ENCODE measurements at regions of chr12 and their contacts with region 1.

Region 1: GRCh38 chr12:121499929-121500793 is 80.7 kb downstream of the KDM2B start:
- DNase-seq: peak; percentile 82
- ATAC-seq: peak; percentile 91
- H3K4me3 ChIP-seq: no peak overlapping the region
- H3K4me3 Mint-ChIP-seq: no peak overlapping the region
- H3K27ac ChIP-seq: no peak overlapping the region
- H3K27ac Mint-ChIP-seq: no peak overlapping the region
- H3K4me1 ChIP-seq: peaks cover 10 to 19% of the 10 kb centered on the region in 2 donors
- H3K4me1 Mint-ChIP-seq: peaks cover 16% of the 10 kb centered on the region
- H3K27me3 ChIP-seq: no peaks in the 10 kb centered on the region
- H3K27me3 Mint-ChIP-seq: no peaks in the 10 kb centered on the region
- CTCF ChIP-seq: peak; percentile 99

Region 2: GRCh38 chr12:121443911-121444841 is 56.0 kb before region 1 on chr12:
- CTCF ChIA-PET with region 1: no interaction called
- POLR2A ChIA-PET with region 1: no interaction called
- intact Hi-C with region 1: no loop called
- DNase-seq: no peak
- ATAC-seq: no peak
- H3K4me3 ChIP-seq: no peak overlapping the region
- H3K4me3 Mint-ChIP-seq: no peak overlapping the region
- H3K27ac ChIP-seq: no peak overlapping the region
- H3K27ac Mint-ChIP-seq: no peak overlapping the region
- H3K4me1 ChIP-seq: no peaks in the 10 kb centered on the region
- H3K4me1 Mint-ChIP-seq: peaks cover 14% of the 10 kb centered on the region
- H3K27me3 ChIP-seq: no peaks in the 10 kb centered on the region
- H3K27me3 Mint-ChIP-seq: no peaks in the 10 kb centered on the region
- CTCF ChIP-seq: no peak

Region 3: GRCh38 chr12:121513464-121514183 is 13.5 kb after region 1 on chr12:
- CTCF ChIA-PET with region 1: interaction called, 6 read pairs
- POLR2A ChIA-PET with region 1: no interaction called
- intact Hi-C with region 1: loop called (anchors 2 kb)
- DNase-seq: no peak
- ATAC-seq: peak; percentile 63
- H3K4me3 ChIP-seq: peak overlapping the region in 4 of 5 experiments; percentile 24 to 49 (median 37)
- H3K4me3 Mint-ChIP-seq: peak overlapping the region; percentile 64
- H3K27ac ChIP-seq: peak overlapping the region; percentile 94
- H3K27ac Mint-ChIP-seq: peak overlapping the region; percentile 91
- H3K4me1 ChIP-seq: peaks cover 14 to 20% of the 10 kb centered on the region in 2 donors
- H3K4me1 Mint-ChIP-seq: peaks cover 20% of the 10 kb centered on the region
- H3K27me3 ChIP-seq: no peaks in the 10 kb centered on the region
- H3K27me3 Mint-ChIP-seq: no peaks in the 10 kb centered on the region
- CTCF ChIP-seq: no peak

Region 4: GRCh38 chr12:121579981-121580868 is 80.1 kb after region 1 on chr12:
- CTCF ChIA-PET with region 1: interaction called, 6 read pairs
- POLR2A ChIA-PET with region 1: interaction called, 6 read pairs
- intact Hi-C with region 1: loop called (anchors 1 kb)
- DNase-seq: peak; percentile 79
- ATAC-seq: peak; percentile 55
- H3K4me3 ChIP-seq: peak overlapping the region; percentile 57 to 93 (median 65)
- H3K4me3 Mint-ChIP-seq: peak overlapping the region; percentile 94
- H3K27ac ChIP-seq: peak overlapping the region; percentile 69 to 77
- H3K27ac Mint-ChIP-seq: peak overlapping the region; percentile 94
- H3K4me1 ChIP-seq: peaks cover 23 to 47% of the 10 kb centered on the region in 2 donors
- H3K4me1 Mint-ChIP-seq: peaks cover 34% of the 10 kb centered on the region
- H3K27me3 ChIP-seq: no peaks in the 10 kb centered on the region
- H3K27me3 Mint-ChIP-seq: no peaks in the 10 kb centered on the region
- CTCF ChIP-seq: no peak

Region 5: GRCh38 chr12:121678716-121679580 is 178.8 kb after region 1 on chr12:
- CTCF ChIA-PET with region 1: interaction called, 19 read pairs
- POLR2A ChIA-PET with region 1: interaction called, 5 read pairs
- intact Hi-C with region 1: loop called (anchors 1 kb)
- DNase-seq: no peak
- ATAC-seq: no peak
- H3K4me3 ChIP-seq: no peak overlapping the region
- H3K4me3 Mint-ChIP-seq: no peak overlapping the region
- H3K27ac ChIP-seq: no peak overlapping the region
- H3K27ac Mint-ChIP-seq: peak overlapping the region; percentile 65
- H3K4me1 ChIP-seq: peaks cover 0 to 3% of the 10 kb centered on the region in 2 donors
- H3K4me1 Mint-ChIP-seq: peaks cover 2% of the 10 kb centered on the region
- H3K27me3 ChIP-seq: no peaks in the 10 kb centered on the region
- H3K27me3 Mint-ChIP-seq: no peaks in the 10 kb centered on the region
- CTCF ChIP-seq: no peak

Measured in B cell (primary cell).